Breast epithelium (tissue), 4 donors: ENCODE measurements at regions of chr10 and their contacts with region 1.

Region 1: GRCh38 chr10:91788220-91788924 is 9.9 kb upstream of the TNKS2 start:
- DNase-seq: peak in 1 of 2 donors; percentile 25
- H3K4me3 ChIP-seq: no peak overlapping the region
- H3K27ac ChIP-seq: no peak overlapping the region
- H3K4me1 ChIP-seq: no peaks in the 10 kb centered on the region
- H3K27me3 ChIP-seq: no peaks in the 10 kb centered on the region
- CTCF ChIP-seq: no peak
- POLR2A ChIP-seq: no peak

Region 2: DNA sequence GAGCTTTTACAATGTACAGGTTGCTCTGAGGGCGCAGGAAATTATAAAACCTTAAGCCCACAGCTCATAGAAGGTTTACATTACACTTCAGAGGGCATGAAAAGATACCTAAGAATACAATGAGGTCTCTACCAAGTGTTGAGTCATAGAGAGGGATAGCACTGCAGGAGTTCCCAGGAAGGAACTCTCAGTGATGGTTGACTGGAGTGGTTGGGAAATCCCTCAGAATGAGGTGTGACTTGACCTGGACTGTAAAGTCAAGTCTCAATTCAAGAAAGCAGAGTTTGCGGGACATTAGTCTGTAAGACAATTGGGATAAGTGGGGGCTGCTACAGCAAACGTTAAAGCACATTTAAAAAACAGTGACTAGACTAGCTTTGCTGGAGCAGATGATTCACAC is 31.8 kb after region 1 on chr10:
- intact Hi-C with region 1: no loop called
- DNase-seq: no peak
- H3K4me3 ChIP-seq: no peak overlapping the region
- H3K27ac ChIP-seq: no peak overlapping the region
- H3K4me1 ChIP-seq: no peaks in the 10 kb centered on the region
- H3K27me3 ChIP-seq: no peaks in the 10 kb centered on the region
- CTCF ChIP-seq: no peak
- POLR2A ChIP-seq: no peak

Region 3: DNA sequence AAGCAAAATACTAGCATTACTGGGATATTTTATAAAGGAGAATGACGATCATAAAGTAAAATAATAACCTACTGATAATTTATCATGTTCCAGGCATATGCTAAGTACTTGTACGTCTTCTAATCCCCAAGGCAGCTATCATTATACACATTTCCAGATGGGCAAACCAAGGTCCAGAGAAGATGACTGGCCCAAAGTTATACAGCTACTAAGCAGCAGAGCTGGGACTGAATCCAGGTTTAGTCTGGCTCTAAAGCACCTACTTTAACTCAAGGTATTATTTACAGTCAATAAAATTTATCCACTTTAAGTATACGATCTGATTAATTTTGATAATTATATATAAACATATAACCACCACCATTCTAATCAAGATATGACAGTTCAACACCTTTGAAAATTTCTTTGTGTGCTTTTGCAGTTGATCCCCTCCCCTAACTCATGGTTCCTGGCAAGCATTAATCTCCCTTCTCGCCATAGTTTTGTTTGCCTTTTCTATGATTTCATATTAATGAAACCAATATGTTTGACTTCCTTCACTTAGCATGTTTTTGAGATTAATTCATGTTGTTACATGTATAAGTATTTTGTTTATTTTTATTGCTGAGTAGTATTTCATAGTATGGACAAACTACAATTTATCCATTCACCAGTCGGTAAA is 375.8 kb after region 1 on chr10:
- intact Hi-C with region 1: loop called (anchors 10 kb)
- DNase-seq: no peak
- H3K4me3 ChIP-seq: no peak overlapping the region
- H3K27ac ChIP-seq: no peak overlapping the region
- H3K4me1 ChIP-seq: no peaks in the 10 kb centered on the region
- H3K27me3 ChIP-seq: no peaks in the 10 kb centered on the region
- CTCF ChIP-seq: no peak
- POLR2A ChIP-seq: no peak

Region 4: DNA sequence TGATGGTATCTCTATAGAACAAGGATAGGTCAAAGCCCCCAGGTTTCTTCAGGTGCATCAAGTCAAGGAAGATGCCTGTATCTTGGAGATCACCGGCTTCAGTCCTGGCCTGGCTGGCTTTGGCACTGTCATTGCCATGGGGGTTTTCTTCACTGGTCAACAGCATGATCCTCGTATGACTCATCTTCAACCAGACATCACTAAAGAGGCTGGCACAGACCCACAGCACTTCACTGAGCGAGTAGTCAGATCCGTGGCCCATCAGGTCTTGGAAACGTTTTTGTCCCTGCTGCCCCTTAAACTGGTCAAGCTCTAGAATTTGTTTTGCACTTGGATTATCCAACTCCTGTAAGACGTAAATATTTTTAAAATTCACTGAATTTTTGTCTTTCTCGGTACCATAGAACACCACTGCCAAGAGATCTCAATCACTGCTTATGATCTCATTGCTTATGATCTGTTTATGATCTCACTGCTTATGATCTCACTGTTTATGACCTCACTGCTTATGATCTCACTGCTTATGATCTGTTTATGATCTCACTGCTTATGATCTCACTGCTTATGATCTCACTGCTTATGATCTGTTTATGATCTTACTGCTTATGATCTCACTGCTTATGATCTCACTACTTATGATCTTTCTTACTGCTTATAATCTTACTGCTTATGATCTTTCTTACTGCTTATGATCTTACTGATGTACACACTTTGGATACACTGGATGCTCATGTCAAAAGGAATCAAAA is 1420.5 kb after region 1 on chr10:
- intact Hi-C with region 1: no loop called
- DNase-seq: peak; percentile 56 to 60
- H3K4me3 ChIP-seq: no peak overlapping the region
- H3K27ac ChIP-seq: no peak overlapping the region
- H3K4me1 ChIP-seq: no peaks in the 10 kb centered on the region
- H3K27me3 ChIP-seq: no peaks in the 10 kb centered on the region
- CTCF ChIP-seq: no peak
- POLR2A ChIP-seq: no peak